Activated CD4-positive, alpha-beta T cell treated with anti-CD3 and anti-CD28 coated beads for 36 hours (primary cell): ENCODE measurements at regions of chr13 and their contacts with region 1.

Region 1: GRCh38 chr13:49792550-49793324 is at the start of gene KPNA3:
- DNase-seq: peak; percentile 98
- ATAC-seq: peak; percentile 93
- H3K4me3 Mint-ChIP-seq: peak within 1 kb of the TSS; percentile 89
- H3K27ac Mint-ChIP-seq: peak within 1 kb of the TSS; percentile 88
- H3K4me1 Mint-ChIP-seq: peaks cover 30% of the 10 kb centered on the region
- H3K27me3 Mint-ChIP-seq: peaks cover 4% of the 10 kb centered on the region
- total RNA-seq, gene KPNA3: 51.7 to 58.0 TPM

Region 2: DNA sequence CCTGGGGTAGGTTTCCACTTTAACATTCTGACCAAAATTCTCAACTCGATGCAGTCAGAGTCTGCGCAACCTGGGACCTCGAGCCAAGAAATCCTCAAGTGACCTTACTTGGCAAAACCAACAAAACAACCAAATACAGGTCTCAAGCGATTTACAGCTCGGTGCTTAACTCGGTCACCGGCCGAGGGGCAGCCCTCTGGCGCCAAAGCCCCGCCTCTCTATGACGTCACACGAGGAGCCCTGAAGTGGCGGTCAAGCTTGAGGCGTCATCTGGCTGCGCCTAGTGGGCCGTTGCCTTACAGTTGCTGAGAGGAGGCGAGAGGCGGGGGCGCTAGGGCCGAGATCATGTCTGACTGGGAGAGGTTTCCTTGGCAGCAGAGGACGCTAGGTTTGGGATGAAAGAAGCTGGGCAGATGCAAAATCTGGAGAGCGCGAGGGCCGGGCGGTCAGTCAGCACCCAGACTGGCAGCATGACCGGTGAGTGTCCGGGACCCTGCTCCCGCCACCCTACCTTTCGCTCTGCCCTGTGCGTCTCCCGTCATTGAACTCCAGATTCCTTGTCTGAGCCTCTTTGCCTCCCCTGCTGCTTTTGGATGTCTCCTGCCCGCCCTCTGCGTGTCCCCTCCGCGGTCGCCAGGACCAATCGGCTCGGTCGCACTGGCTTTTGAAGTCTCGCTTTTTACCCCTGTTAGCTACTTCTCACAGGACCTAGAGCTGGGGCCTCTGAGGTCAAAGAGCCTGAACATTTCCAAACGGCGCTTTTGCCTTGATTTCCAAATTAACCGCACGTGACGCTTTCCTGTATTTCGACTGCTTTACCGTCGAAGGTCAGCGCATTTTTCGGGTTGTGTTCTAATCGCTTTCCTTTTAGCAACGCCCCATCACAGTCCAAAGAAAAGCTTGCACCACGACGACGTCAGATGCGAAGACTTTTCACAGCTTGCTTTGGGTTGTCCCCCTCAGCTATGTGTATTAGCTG is 544.8 kb before region 1 on chr13 and contains the start of gene CDADC1:
- CTCF ChIA-PET with region 1: no interaction called
- POLR2A ChIA-PET with region 1: no interaction called
- intact Hi-C with region 1: loop called in 1 of 2 experiments (anchors 2 kb)
- DNase-seq: peak; percentile 96
- ATAC-seq: peak; percentile 94
- H3K4me3 Mint-ChIP-seq: peak within 1 kb of the TSS; percentile 92
- H3K27ac Mint-ChIP-seq: peak within 1 kb of the TSS; percentile 96
- H3K4me1 Mint-ChIP-seq: peaks cover 34% of the 10 kb centered on the region
- H3K27me3 Mint-ChIP-seq: peaks cover 2% of the 10 kb centered on the region
- total RNA-seq, gene CDADC1: 8.5 to 9.7 TPM

Region 3: GRCh38 chr13:49585220-49586157 is 207.2 kb before region 1 on chr13 and contains the start of gene RCBTB1:
- CTCF ChIA-PET with region 1: interaction called, 4 read pairs
- POLR2A ChIA-PET with region 1: no interaction called
- intact Hi-C with region 1: loop called in 1 of 2 experiments (anchors 1 kb)
- DNase-seq: peak; percentile 80
- ATAC-seq: peak; percentile 95
- H3K4me3 Mint-ChIP-seq: peak within 1 kb of the TSS; percentile 99
- H3K27ac Mint-ChIP-seq: peak within 1 kb of the TSS; percentile 95
- H3K4me1 Mint-ChIP-seq: peaks cover 29% of the 10 kb centered on the region
- H3K27me3 Mint-ChIP-seq: no peaks in the 10 kb centered on the region
- total RNA-seq, gene RCBTB1: 9.8 to 14.9 TPM

Region 4: DNA sequence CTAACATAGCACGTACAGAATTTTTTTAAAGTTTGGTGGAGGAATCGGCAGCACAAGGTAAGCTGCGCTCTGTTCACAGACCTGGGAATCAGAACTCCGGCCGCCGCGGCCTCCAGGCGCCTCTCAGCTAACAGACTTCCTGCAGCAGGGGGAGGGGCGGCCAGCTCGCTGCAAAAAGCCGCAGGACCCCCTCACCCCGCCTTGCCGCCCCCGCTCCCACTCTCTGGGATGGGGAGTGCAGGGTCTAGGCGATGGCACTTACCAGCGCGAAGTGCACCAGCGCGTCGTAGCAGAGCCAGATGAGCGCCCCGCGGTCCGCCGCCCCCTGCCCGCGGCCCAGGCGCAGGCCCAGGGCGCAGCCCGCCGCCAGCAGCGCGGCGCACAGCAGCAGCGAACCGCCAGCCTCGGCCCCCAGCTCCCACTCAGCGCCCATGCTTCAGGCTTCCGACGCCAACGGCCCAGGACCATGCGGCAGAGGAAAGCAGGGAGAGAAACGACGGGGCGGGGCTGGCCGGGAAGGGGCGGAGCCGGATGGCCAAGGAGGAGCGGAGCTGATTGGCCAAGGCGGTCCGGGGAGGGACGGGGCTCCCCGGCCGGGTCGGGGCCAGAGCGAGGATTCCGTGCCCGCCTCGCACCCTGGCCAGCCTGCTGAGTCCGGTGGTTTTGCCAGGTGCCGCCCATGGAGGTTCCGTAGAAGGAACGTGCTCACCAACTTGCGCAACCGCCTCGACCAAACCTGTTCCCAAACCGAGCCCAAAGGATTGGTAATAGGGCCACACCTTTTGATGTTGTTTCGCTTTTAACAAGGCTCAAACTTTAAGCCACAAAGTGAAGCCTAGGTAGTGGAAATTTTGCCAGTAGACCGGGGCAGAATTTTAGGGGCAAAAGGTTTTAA is 101.5 kb before region 1 on chr13 and contains the start of gene EBPL:
- CTCF ChIA-PET with region 1: interaction called, 8 read pairs
- POLR2A ChIA-PET with region 1: interaction called, 13 read pairs
- intact Hi-C with region 1: loop called (anchors 1 to 2 kb)
- DNase-seq: peak; percentile 95
- ATAC-seq: peak; percentile 98
- H3K4me3 Mint-ChIP-seq: peak within 1 kb of the TSS; percentile 87
- H3K27ac Mint-ChIP-seq: peak within 1 kb of the TSS; percentile 84
- H3K4me1 Mint-ChIP-seq: peaks cover 30% of the 10 kb centered on the region
- H3K27me3 Mint-ChIP-seq: no peaks in the 10 kb centered on the region
- total RNA-seq, gene EBPL: 40.7 to 55.8 TPM

Region 5: DNA sequence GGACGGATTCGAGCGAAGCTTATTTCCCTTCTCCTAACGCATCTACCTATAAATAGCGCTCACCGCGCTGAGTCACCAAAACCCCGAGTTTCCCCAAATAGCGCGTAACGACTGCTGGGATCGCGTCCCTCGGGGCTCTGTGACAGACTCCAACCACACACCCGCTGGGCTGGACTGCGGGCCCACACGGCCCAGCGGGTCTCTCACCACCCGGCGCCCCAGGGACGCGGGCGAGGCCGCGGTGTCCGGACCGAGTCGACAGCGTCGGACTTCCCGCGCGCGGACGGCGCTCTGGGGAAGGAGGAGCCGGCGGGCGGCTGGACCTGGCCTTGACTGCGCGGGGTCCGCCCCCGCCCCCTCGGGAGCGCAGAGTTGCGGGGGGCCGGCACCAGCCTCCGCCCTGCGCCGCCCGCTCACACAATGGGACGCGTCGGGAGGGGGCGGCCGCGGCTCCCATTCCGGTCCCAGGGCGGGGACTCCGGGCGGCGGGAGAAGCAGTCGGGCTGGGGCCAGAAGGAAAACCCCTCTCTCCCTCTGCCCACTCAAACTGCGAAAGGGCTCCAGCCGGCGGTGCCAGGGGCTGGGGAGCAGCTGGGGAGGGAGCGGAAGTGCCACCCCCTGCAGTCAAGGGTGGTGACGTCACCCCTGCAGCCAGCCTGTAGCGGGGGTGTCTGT is 331.3 kb after region 1 on chr13:
- CTCF ChIA-PET with region 1: no interaction called
- POLR2A ChIA-PET with region 1: no interaction called
- intact Hi-C with region 1: loop called (anchors 2 to 5 kb)
- DNase-seq: peak; percentile 86
- ATAC-seq: peak; percentile 68
- H3K4me3 Mint-ChIP-seq: peak overlapping the region; percentile 72
- H3K27ac Mint-ChIP-seq: peak overlapping the region; percentile 89
- H3K4me1 Mint-ChIP-seq: peaks cover 49% of the 10 kb centered on the region
- H3K27me3 Mint-ChIP-seq: peaks cover 13% of the 10 kb centered on the region